Activated CD4-positive, alpha-beta T cell treated with anti-CD3 and anti-CD28 coated beads, Interleukin-2, amount 10 ng/mL, durations not matched to agents 24 days and 14 days (primary cell): ENCODE measurements at regions of chr22 and their contacts with region 1.

Region 1: GRCh38 chr22:22877523-22878210 is 9.9 kb upstream of the IGLL5 start:
- DNase-seq: peak; percentile 92
- H3K4me3 Mint-ChIP-seq: no peak overlapping the region
- H3K27ac Mint-ChIP-seq: peak overlapping the region; percentile 20
- H3K4me1 Mint-ChIP-seq: no peaks in the 10 kb centered on the region
- H3K27me3 Mint-ChIP-seq: peaks cover 25% of the 10 kb centered on the region

Region 2: GRCh38 chr22:22810018-22810427 is 67.6 kb before region 1 on chr22:
- intact Hi-C with region 1: loop called (anchors 2 kb)
- DNase-seq: peak; percentile 89
- H3K4me3 Mint-ChIP-seq: no peak overlapping the region
- H3K27ac Mint-ChIP-seq: no peak overlapping the region
- H3K4me1 Mint-ChIP-seq: peaks cover 7% of the 10 kb centered on the region
- H3K27me3 Mint-ChIP-seq: peaks cover 26% of the 10 kb centered on the region

Region 3: GRCh38 chr22:22848364-22848866 is 29.3 kb before region 1 on chr22:
- intact Hi-C with region 1: loop called (anchors 1 kb)
- DNase-seq: peak; percentile 92
- H3K4me3 Mint-ChIP-seq: no peak overlapping the region
- H3K27ac Mint-ChIP-seq: no peak overlapping the region
- H3K4me1 Mint-ChIP-seq: peaks cover 7% of the 10 kb centered on the region
- H3K27me3 Mint-ChIP-seq: peaks cover 51% of the 10 kb centered on the region

Region 4: GRCh38 chr22:22855617-22856308 is 21.9 kb before region 1 on chr22:
- intact Hi-C with region 1: loop called (anchors 1 kb)
- DNase-seq: peak; percentile 82
- H3K4me3 Mint-ChIP-seq: no peak overlapping the region
- H3K27ac Mint-ChIP-seq: no peak overlapping the region
- H3K4me1 Mint-ChIP-seq: no peaks in the 10 kb centered on the region
- H3K27me3 Mint-ChIP-seq: peaks cover 52% of the 10 kb centered on the region